Endothelial cell of umbilical vein (primary cell): ENCODE measurements at regions of chr16 and their contacts with region 1.

Region 1: DNA sequence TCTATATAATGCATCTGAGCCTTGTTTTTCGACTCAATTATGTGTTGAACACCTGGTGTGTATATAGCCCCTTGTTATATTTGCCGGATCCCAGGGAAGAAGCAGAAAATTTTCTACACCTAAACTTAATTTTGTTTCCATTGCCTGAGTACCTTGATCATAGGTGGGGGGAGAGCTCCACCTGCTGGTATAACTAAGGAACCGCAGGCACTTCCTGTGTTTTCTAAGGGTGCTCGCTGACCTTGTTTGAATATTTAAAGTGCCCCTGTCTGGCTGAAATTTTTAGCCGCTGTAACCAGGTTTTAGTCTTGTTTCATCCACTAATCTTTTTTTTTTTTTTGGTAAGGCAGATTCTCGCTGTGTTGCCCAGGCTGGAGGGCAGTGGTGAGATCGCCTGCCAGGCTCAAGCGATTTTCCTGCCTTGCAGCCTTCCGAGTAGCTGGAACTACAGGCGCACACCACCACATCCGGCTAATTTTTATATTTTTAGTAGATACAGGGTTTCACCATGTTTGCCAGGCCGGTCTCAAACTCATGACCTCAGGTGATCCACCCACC is 6.5 kb upstream of the NUBP1 start:
- DNase-seq: peak; percentile 67
- H3K4me3 ChIP-seq: no peak overlapping the region
- H3K27ac ChIP-seq: no peak overlapping the region
- H3K4me1 ChIP-seq: peaks cover 7% of the 10 kb centered on the region
- H3K27me3 ChIP-seq: no peaks in the 10 kb centered on the region
- CTCF ChIP-seq: peak; percentile 77 to 82
- POLR2A ChIP-seq: no peak

Region 2: DNA sequence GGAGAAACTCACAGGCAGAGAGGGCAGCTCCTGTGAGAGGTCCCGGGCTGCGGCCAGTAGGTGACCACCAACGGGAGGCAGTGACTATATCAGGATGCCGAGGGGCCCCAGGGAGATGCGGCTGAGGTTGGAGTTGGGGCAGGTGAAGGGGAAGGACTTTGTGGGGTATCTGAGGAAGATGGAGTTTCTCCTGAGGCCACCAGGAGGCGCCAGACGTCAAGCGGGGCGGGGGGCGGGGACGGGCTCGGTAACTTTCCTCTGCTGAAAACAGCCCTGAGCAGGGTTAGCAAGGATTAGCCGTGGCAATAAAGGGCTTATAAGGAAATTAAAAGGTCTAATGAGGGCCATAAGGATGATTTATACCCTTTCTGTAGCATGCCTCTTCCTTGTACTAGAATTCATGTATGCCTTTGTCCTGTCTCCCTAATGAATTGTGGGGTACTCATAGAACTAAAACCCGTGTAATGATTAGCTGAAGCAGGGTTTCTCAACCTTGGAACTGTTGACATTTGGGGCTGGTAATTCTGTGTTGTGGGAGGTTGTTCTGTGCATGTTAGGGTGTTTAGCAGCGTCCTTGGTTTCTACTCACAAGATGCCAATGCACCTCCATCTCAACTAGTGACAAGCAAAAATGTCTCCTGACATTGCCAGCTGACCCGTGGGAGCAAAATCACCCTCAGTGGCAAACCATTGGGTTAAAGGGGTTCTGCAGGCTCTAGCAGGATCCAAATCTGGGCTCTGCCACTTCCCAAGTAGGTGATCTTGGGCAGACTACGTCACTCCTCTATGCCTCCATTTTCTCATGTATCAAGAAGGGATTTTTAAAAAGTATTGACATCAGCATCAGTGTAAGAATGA is 480.1 kb before region 1 on chr16:
- CTCF ChIA-PET with region 1: interaction called, 6 read pairs
- POLR2A ChIA-PET with region 1: no interaction called
- dilution Hi-C with region 1: no loop called
- intact Hi-C with region 1: loop called (anchors 1 kb)
- DNase-seq: peak; percentile 7
- H3K4me3 ChIP-seq: no peak overlapping the region
- H3K27ac ChIP-seq: no peak overlapping the region
- H3K4me1 ChIP-seq: no peaks in the 10 kb centered on the region
- H3K27me3 ChIP-seq: no peaks in the 10 kb centered on the region
- CTCF ChIP-seq: peak; percentile 43 to 67
- POLR2A ChIP-seq: no peak

Region 3: GRCh38 chr16:10521681-10522274 is 215.4 kb before region 1 on chr16:
- CTCF ChIA-PET with region 1: interaction called, 189 read pairs
- POLR2A ChIA-PET with region 1: interaction called, 5 read pairs
- dilution Hi-C with region 1: no loop called
- intact Hi-C with region 1: loop called (anchors 1 kb)
- DNase-seq: peak; percentile 49
- H3K4me3 ChIP-seq: no peak overlapping the region
- H3K27ac ChIP-seq: no peak overlapping the region
- H3K4me1 ChIP-seq: no peaks in the 10 kb centered on the region
- H3K27me3 ChIP-seq: no peaks in the 10 kb centered on the region
- CTCF ChIP-seq: peak; percentile 69 to 82
- POLR2A ChIP-seq: no peak

Region 4: DNA sequence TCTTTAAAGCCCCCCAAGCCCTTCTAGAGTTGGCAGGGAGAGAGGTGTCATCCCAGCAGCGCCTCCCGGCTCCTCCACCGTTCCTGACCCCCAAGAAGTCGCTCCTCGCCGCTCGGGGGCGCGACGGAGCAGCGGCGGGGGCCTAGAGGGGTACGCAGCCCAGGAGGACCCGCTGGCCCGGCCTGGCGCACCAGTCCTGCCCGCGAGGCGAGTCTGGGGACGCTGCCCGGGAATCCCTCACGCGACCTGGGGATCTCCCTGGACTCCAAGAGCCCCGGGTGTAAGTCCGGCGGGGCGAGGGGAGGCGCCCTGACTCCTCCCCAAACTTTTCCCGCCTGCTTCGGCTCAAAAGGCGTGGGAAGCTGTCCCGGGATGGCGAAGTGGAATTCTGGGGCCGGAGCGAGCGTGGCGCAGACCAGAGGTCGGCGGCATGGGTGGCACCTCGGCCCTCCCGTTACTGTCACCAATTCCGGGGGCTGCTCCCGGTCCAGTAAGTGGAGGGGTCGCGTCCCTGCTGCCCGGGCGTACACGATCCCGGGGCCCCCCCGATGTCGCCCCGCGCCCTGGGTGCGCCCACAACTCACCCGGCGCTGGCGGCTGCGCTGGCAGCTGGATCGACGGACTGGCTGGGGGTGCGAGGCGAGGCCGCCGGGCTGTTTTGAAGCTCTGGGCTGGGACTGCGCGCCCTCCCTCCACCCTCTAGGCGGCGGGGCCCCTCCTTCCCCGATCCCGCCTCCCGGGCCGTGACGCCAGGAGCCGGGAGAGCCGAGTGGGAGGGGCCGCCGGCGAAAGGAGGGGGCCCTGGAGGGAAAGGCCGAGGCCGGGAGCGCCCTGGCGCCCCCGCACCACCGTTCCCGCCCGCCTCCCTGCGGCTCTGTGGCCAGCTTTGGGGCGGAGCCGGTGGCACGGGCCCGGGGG is 156.9 kb before region 1 on chr16 and contains the start of gene EMP2:
- CTCF ChIA-PET with region 1: interaction called, 3 read pairs
- POLR2A ChIA-PET with region 1: no interaction called
- dilution Hi-C with region 1: no loop called
- intact Hi-C with region 1: loop called (anchors 1 kb)
- DNase-seq: peak; percentile 72
- H3K4me3 ChIP-seq: peak within 1 kb of the TSS; percentile 64 to 73 (median 64)
- H3K27ac ChIP-seq: peak within 1 kb of the TSS; percentile 30
- H3K4me1 ChIP-seq: peaks cover 3% of the 10 kb centered on the region
- H3K27me3 ChIP-seq: peaks cover 6 to 12% of the 10 kb centered on the region in 2 experiments
- CTCF ChIP-seq: peak; percentile 47 to 80
- POLR2A ChIP-seq: no peak
- total RNA-seq, gene EMP2: 18.3 and 25.5 TPM in 2 replicates

Region 5: GRCh38 chr16:10605636-10606035 is 131.5 kb before region 1 on chr16:
- CTCF ChIA-PET with region 1: no interaction called
- POLR2A ChIA-PET with region 1: interaction called, 19 read pairs
- dilution Hi-C with region 1: no loop called
- intact Hi-C with region 1: no loop called
- DNase-seq: no peak
- H3K4me3 ChIP-seq: no peak overlapping the region
- H3K27ac ChIP-seq: no peak overlapping the region
- H3K4me1 ChIP-seq: no peaks in the 10 kb centered on the region
- H3K27me3 ChIP-seq: no peaks in the 10 kb centered on the region
- CTCF ChIP-seq: no peak
- POLR2A ChIP-seq: no peak

Region 6: GRCh38 chr16:10668322-10669045 is 68.7 kb before region 1 on chr16:
- CTCF ChIA-PET with region 1: interaction called, 16 read pairs
- POLR2A ChIA-PET with region 1: no interaction called
- dilution Hi-C with region 1: no loop called
- intact Hi-C with region 1: loop called (anchors 1 kb)
- DNase-seq: peak; percentile 14
- H3K4me3 ChIP-seq: no peak overlapping the region
- H3K27ac ChIP-seq: no peak overlapping the region
- H3K4me1 ChIP-seq: no peaks in the 10 kb centered on the region
- H3K27me3 ChIP-seq: no peaks in the 10 kb centered on the region
- CTCF ChIP-seq: peak; percentile 34 to 66
- POLR2A ChIP-seq: no peak

Region 7: GRCh38 chr16:10765772-10766171 is 28.6 kb after region 1 on chr16:
- CTCF ChIA-PET with region 1: no interaction called
- POLR2A ChIA-PET with region 1: no interaction called
- dilution Hi-C with region 1: no loop called
- intact Hi-C with region 1: no loop called
- DNase-seq: no peak
- H3K4me3 ChIP-seq: no peak overlapping the region
- H3K27ac ChIP-seq: no peak overlapping the region
- H3K4me1 ChIP-seq: no peaks in the 10 kb centered on the region
- H3K27me3 ChIP-seq: no peaks in the 10 kb centered on the region
- CTCF ChIP-seq: no peak
- POLR2A ChIP-seq: no peak